Mammary epithelial cell (primary cell): ENCODE measurements at regions of chr17 and their contacts with region 1.

Region 1: DNA sequence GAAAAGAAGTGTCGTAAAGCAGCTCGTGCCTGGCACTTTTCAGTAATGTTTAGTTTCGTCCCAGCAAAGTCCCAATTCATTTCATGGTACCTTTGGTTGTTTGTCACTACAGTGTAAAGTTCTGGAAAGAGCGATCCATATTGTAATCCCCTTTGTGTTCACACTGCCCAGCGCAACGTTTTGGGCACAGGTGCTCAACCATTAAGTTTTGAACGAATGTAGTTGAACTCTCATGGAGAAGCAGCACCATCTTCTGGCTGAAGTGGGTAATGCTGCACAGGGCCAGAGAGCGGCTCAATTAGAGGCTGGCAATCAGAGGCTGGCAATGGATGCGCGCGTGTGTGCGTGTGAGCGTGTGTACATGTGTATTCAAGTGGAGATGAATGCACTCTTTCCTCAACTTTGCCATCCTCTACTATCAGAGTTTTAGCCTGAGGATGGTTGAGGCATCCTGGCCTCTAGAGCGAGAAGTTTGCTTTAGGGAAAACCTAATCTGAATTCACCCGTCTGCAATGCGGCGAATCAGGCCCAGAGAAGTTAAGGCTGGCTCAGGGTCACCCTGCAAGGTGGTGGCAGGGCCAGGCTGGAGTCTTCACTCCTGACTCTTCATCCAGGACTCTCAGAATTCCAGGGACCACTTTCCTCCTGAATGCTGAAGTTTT is 29.9 kb downstream of the DYNLL2 start:
- DNase-seq: peak; percentile 55
- H3K4me3 ChIP-seq: no peak overlapping the region
- H3K27ac ChIP-seq: no peak overlapping the region
- H3K4me1 ChIP-seq: no peaks in the 10 kb centered on the region
- H3K27me3 ChIP-seq: no peaks in the 10 kb centered on the region
- CTCF ChIP-seq: peak; percentile 95 to 98

Region 2: GRCh38 chr17:57597531-57598453 is 515.3 kb before region 1 on chr17:
- CTCF ChIA-PET with region 1: no interaction called
- dilution Hi-C with region 1: no loop called
- in situ Hi-C with region 1: no loop called
- intact Hi-C with region 1: loop called (anchors 1 kb)
- DNase-seq: peak; percentile 49
- H3K4me3 ChIP-seq: no peak overlapping the region
- H3K27ac ChIP-seq: no peak overlapping the region
- H3K4me1 ChIP-seq: peaks cover 2% of the 10 kb centered on the region
- H3K27me3 ChIP-seq: no peaks in the 10 kb centered on the region
- CTCF ChIP-seq: peak; percentile 83 to 85

Region 3: DNA sequence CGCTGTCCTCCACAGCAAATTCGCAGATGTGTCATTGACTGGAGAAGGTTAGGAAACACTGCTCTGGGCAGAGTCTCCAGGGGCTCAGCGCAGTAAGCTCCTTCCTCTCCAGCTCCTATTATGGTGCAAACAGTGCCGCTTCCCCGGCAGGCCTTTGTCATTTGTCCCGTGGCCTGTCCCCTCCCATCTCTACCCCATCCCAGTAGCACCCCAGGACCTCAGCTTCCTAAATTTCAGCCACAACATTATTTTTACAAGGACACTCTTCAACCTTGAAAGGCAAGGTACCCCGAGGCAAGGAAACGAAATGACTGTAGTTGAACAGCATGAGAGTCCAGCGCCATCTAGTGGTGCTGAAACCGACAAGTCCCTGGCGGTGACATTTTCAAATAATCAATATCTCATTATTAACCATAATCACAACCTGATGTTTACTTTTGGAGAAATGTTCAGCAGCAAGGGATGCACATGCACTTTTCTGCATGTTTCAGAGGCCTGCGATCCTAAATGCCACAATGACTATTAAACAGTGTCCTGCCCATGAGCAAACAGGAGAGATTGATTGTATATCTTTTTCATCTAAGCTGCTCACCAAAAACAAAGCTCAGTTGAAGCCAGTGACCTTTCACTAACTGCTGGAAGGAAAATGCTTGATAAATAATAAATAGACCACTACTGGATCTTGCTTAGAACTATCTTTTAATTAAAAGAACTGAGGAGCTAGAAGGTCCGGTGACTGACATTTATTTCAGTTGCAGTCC is 279.7 kb before region 1 on chr17:
- CTCF ChIA-PET with region 1: no interaction called
- dilution Hi-C with region 1: no loop called
- in situ Hi-C with region 1: no loop called
- intact Hi-C with region 1: loop called (anchors 1 kb)
- DNase-seq: peak; percentile 41
- H3K4me3 ChIP-seq: peak overlapping the region in 1 of 3 experiments; percentile 25
- H3K27ac ChIP-seq: no peak overlapping the region
- H3K4me1 ChIP-seq: peaks cover 4% of the 10 kb centered on the region
- H3K27me3 ChIP-seq: no peaks in the 10 kb centered on the region
- CTCF ChIP-seq: peak; percentile 90 to 97

Region 4: DNA sequence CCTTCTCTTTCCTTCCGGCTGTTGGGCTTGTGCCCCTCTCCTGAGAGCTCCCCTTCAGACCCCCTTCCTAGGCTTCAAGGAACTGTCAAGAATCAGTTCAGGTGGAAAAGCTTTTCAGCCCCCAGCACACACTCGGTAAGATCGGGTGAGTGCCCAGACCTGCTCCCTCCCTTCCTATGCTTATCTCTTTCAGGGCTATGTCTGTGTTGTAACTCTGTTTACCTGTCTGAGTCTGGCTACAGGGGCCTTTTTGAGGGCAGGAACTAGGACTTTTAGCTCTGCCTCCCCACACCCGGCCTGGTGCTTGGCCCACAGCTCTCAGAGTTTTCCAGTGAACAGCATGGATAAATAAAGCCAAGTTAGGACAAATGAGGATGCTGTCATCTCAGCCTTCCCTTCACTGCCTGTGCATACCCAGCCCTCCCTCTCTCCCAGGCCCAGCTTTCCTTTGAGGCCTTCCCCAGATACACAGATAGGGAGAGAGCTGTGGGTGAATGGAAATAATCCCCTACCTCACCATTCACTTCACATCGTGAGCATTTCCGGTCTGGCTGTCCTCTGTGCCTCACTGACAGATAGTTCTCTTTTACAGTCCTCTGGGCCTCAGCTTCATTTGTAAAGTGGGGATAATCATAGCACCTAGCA is 257.6 kb before region 1 on chr17:
- CTCF ChIA-PET with region 1: no interaction called
- dilution Hi-C with region 1: no loop called
- in situ Hi-C with region 1: loop called in 1 of 2 experiments (anchors 10 kb)
- intact Hi-C with region 1: loop called (anchors 1 kb)
- DNase-seq: no peak
- H3K4me3 ChIP-seq: no peak overlapping the region
- H3K27ac ChIP-seq: no peak overlapping the region
- H3K4me1 ChIP-seq: peaks cover 7% of the 10 kb centered on the region
- H3K27me3 ChIP-seq: no peaks in the 10 kb centered on the region
- CTCF ChIP-seq: no peak

Region 5: GRCh38 chr17:58006924-58007780 is 105.9 kb before region 1 on chr17 and contains the start of gene SRSF1:
- CTCF ChIA-PET with region 1: no interaction called
- dilution Hi-C with region 1: no loop called
- in situ Hi-C with region 1: no loop called
- intact Hi-C with region 1: loop called (anchors 2 kb)
- DNase-seq: peak; percentile 97
- H3K4me3 ChIP-seq: peak within 1 kb of the TSS; percentile 78 to 97 (median 88)
- H3K27ac ChIP-seq: peak within 1 kb of the TSS; percentile 96
- H3K4me1 ChIP-seq: peaks cover 21% of the 10 kb centered on the region
- H3K27me3 ChIP-seq: no peaks in the 10 kb centered on the region
- CTCF ChIP-seq: no peak
- total RNA-seq, gene SRSF1: 197 to 238 TPM

Region 6: GRCh38 chr17:58210922-58211321 is 97.8 kb after region 1 on chr17:
- CTCF ChIA-PET with region 1: no interaction called
- dilution Hi-C with region 1: no loop called
- in situ Hi-C with region 1: no loop called
- intact Hi-C with region 1: no loop called
- DNase-seq: no peak
- H3K4me3 ChIP-seq: no peak overlapping the region
- H3K27ac ChIP-seq: no peak overlapping the region
- H3K4me1 ChIP-seq: no peaks in the 10 kb centered on the region
- H3K27me3 ChIP-seq: no peaks in the 10 kb centered on the region
- CTCF ChIP-seq: peak in 1 of 2 donors; percentile 17